ENCODE measurements at regions of chr16 and their contacts with region 1.

Region 1: DNA sequence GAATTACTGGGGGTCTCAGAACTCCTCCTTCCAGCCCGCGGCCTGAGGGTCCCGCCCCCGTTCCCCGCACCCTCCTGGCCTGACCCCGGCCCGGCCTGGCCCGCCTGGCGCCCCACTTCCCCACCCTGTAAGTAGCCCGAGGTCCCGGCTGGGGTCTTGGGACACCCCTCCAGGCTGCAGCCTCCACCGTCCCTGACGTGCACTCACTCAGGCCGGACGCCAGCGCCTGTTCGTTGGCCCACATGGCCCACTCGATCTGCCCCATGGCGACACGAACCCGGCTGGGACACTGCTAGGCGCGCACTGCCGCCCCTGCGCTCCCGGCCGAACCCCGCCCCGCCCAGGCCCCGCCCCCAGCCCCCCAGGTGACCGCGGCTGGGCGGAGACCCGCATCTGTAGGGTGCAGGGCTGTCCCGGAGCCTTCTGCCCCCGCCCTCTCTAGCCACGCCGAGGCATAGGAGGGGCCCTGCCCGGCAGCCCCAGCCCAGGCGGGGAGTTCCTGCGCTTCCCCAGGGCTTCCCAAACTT is at the start of gene CYBA:
- DNase-seq: peak; percentile 54 to 88 (median 68)
- ATAC-seq: peak; percentile 92
- H3K4me3 ChIP-seq: peak within 1 kb of the TSS; percentile 78
- H3K4me3 Mint-ChIP-seq: peak within 1 kb of the TSS; percentile 84 to 93 (median 90)
- H3K27ac ChIP-seq: peak within 1 kb of the TSS; percentile 84
- H3K27ac Mint-ChIP-seq: peak within 1 kb of the TSS; percentile 82 to 98 (median 91)
- H3K4me1 ChIP-seq: peaks cover 20 to 28% of the 10 kb centered on the region in 2 donors
- H3K4me1 Mint-ChIP-seq: peaks cover 6 to 27% (median 13%) of the 10 kb centered on the region in 7 donors
- H3K27me3 ChIP-seq: no peaks in the 10 kb centered on the region
- H3K27me3 Mint-ChIP-seq: no peaks in the 10 kb centered on the region
- total RNA-seq, gene CYBA: 240 to 498 (median 281) TPM

Region 2: DNA sequence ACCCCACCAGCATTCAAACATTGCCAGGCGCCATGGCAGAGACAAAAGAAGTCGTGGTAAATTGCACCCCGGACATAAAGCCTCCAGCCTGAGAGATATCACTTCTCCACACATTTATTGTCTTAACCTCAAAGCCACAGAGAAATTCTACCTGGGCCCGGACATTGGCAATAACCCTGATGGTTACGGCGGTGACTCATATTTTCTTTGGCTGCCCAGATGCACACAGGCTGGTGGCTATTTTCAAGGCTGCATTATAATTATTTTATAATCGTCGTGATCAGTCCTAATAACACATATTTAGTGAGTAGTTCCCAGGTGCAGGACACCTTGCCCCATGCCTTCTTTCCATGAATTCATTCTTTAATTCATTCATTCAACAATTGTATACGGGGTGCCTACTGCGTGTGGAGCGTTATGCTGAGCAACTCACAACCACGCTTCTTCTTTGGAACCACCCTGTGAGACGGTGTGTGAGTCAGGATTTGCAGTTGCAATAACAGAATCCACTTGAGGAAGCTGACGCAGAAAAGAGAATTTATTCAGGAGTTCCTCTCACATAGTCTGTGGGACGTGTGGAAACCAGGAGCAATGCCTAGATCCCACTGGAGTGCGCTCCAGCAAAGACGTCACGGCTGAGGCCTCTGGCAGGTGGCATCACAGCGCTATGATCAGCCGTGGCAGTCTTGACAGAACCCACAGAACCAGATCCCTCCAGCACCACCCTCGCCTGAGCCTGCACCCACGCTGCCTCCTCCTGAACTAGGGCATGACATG is 1826.7 kb before region 1 on chr16:
- CTCF ChIA-PET with region 1: no interaction called
- POLR2A ChIA-PET with region 1: no interaction called
- intact Hi-C with region 1: no loop called
- DNase-seq: no peak
- ATAC-seq: no peak
- H3K4me3 ChIP-seq: no peak overlapping the region
- H3K4me3 Mint-ChIP-seq: no peak overlapping the region
- H3K27ac ChIP-seq: no peak overlapping the region
- H3K27ac Mint-ChIP-seq: no peak overlapping the region
- H3K4me1 ChIP-seq: no peaks in the 10 kb centered on the region
- H3K4me1 Mint-ChIP-seq: peaks cover 0 to 4% (median 0%) of the 10 kb centered on the region in 7 donors
- H3K27me3 ChIP-seq: no peaks in the 10 kb centered on the region
- H3K27me3 Mint-ChIP-seq: peaks cover 28 to 60% (median 50%) of the 10 kb centered on the region in 5 donors

Region 3: GRCh38 chr16:88569985-88570690 is 80.7 kb before region 1 on chr16 and contains the start of gene ZC3H18:
- CTCF ChIA-PET with region 1: no interaction called
- POLR2A ChIA-PET with region 1: interaction called, 3 read pairs
- intact Hi-C with region 1: loop called (anchors 1 kb)
- DNase-seq: peak; percentile 93 to 99 (median 96)
- ATAC-seq: peak; percentile 99
- H3K4me3 ChIP-seq: peak within 1 kb of the TSS; percentile 84
- H3K4me3 Mint-ChIP-seq: peak within 1 kb of the TSS; percentile 81 to 93 (median 87)
- H3K27ac ChIP-seq: peak within 1 kb of the TSS; percentile 91
- H3K27ac Mint-ChIP-seq: peak within 1 kb of the TSS; percentile 45 to 93 (median 89)
- H3K4me1 ChIP-seq: peaks cover 21% of the 10 kb centered on the region in 2 donors
- H3K4me1 Mint-ChIP-seq: peaks cover 10 to 39% (median 34%) of the 10 kb centered on the region in 7 donors
- H3K27me3 ChIP-seq: no peaks in the 10 kb centered on the region
- H3K27me3 Mint-ChIP-seq: no peaks in the 10 kb centered on the region
- total RNA-seq, gene ZC3H18: 74.0 to 97.8 (median 82.6) TPM

Region 4: DNA sequence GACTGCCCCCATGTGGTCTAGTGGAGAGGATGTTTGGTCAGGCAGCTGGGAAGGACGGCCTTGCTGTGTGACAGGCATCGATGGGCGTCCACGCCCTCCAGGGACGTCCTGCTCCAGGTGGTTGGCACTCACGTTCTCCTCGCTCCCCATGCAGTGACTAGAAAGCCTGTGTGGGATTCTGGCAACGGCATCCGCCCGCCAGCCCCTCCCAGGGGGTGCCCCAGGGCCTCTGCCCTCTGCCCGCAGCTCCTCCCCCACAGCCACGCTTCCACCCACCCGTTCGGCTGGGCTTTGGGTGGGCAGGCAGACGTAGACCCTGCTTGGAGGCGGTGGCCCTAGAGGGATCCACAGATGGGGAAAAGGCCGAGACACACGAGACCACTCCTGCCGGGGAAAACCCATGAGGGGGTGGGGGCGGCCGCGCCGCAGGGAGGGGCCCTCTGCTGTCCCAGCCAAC is 17.1 kb before region 1 on chr16:
- CTCF ChIA-PET with region 1: no interaction called
- POLR2A ChIA-PET with region 1: interaction called, 11 read pairs
- intact Hi-C with region 1: loop called (anchors 1 to 2 kb)
- DNase-seq: peak in 2 of 9 donors; percentile 26 to 61
- ATAC-seq: peak; percentile 46
- H3K4me3 ChIP-seq: peak overlapping the region; percentile 52
- H3K4me3 Mint-ChIP-seq: peak overlapping the region; percentile 36 to 80 (median 63)
- H3K27ac ChIP-seq: peak overlapping the region; percentile 58
- H3K27ac Mint-ChIP-seq: peak overlapping the region in 2 of 9 donors; percentile 5 to 19
- H3K4me1 ChIP-seq: peaks cover 12 to 24% of the 10 kb centered on the region in 2 donors
- H3K4me1 Mint-ChIP-seq: peaks cover 17 to 36% (median 24%) of the 10 kb centered on the region in 7 donors
- H3K27me3 ChIP-seq: peaks cover 0 to under 1% of the 10 kb centered on the region in 2 donors
- H3K27me3 Mint-ChIP-seq: peaks cover 0 to 24% (median 8%) of the 10 kb centered on the region in 5 donors

Region 5: GRCh38 chr16:88662843-88663606 is 12.2 kb after region 1 on chr16 and contains the start of gene MVD:
- CTCF ChIA-PET with region 1: no interaction called
- POLR2A ChIA-PET with region 1: interaction called, 5 read pairs
- intact Hi-C with region 1: loop called (anchors 1 kb)
- DNase-seq: peak; percentile 88 to 96 (median 94)
- ATAC-seq: peak; percentile 99
- H3K4me3 ChIP-seq: peak within 1 kb of the TSS; percentile 89
- H3K4me3 Mint-ChIP-seq: peak within 1 kb of the TSS; percentile 91 to 96 (median 94)
- H3K27ac ChIP-seq: peak within 1 kb of the TSS; percentile 95
- H3K27ac Mint-ChIP-seq: peak within 1 kb of the TSS; percentile 56 to 95 (median 93)
- H3K4me1 ChIP-seq: peaks cover 8% of the 10 kb centered on the region in 2 donors
- H3K4me1 Mint-ChIP-seq: peaks cover 12 to 26% (median 19%) of the 10 kb centered on the region in 7 donors
- H3K27me3 ChIP-seq: no peaks in the 10 kb centered on the region
- H3K27me3 Mint-ChIP-seq: no peaks in the 10 kb centered on the region
- total RNA-seq, gene MVD: 37.7 to 66.9 (median 42.7) TPM

Region 6: DNA sequence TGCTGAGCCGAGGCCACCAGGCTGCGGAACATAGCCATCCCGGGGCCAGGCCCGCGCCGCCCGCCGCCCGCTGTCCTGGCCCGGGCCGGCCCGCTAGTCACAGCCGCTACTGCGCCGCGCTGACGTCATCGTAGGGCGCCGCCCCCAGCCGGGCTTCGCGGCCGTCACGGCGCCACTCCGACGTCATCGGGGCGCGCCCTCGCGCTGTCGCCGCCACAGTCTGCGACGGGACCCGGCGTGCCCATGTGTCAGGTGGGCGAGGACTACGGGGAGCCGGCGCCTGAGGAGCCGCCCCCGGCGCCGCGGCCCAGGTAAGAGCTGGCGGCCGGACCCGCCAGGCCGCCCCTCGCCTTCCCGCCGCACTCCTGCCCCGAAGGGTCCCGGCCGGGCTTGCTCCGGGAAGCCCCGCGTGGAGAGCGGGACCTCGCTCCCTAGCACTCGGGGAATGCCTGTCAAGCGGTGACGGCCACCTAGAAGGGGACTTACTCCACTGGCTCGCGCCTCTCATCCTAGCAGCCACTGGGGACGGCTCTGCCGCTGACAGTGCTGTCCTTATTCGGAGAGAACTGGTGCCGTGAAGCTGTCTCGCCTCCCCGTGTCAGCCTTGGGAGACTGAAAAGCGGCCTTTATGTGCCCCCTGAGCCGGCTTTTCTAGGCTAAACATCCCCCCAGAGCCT is 55.6 kb after region 1 on chr16 and contains the starts of genes CTU2 and RNF166:
- CTCF ChIA-PET with region 1: interaction called, 4 read pairs
- POLR2A ChIA-PET with region 1: interaction called, 13 read pairs
- intact Hi-C with region 1: loop called (anchors 1 kb)
- DNase-seq: peak; percentile 86 to 98 (median 92)
- ATAC-seq: peak; percentile 84
- H3K4me3 ChIP-seq: peak within 1 kb of the TSS; percentile 79
- H3K4me3 Mint-ChIP-seq: peak within 1 kb of the TSS; percentile 78 to 98 (median 94)
- H3K27ac ChIP-seq: peak within 1 kb of the TSS; percentile 88
- H3K27ac Mint-ChIP-seq: peak within 1 kb of the TSS; percentile 85 to 98 (median 97)
- H3K4me1 ChIP-seq: peaks cover 25 to 40% of the 10 kb centered on the region in 2 donors
- H3K4me1 Mint-ChIP-seq: peaks cover 31 to 45% (median 41%) of the 10 kb centered on the region in 7 donors
- H3K27me3 ChIP-seq: no peaks in the 10 kb centered on the region
- H3K27me3 Mint-ChIP-seq: no peaks in the 10 kb centered on the region
- total RNA-seq, gene CTU2: 26.0 to 43.3 (median 28.3) TPM
- total RNA-seq, gene RNF166: 99.8 to 324 (median 133) TPM

Region 7: GRCh38 chr16:88750854-88751253 is 100.0 kb after region 1 on chr16:
- CTCF ChIA-PET with region 1: no interaction called
- POLR2A ChIA-PET with region 1: no interaction called
- intact Hi-C with region 1: no loop called
- DNase-seq: no peak
- ATAC-seq: no peak
- H3K4me3 ChIP-seq: no peak overlapping the region
- H3K4me3 Mint-ChIP-seq: no peak overlapping the region
- H3K27ac ChIP-seq: no peak overlapping the region
- H3K27ac Mint-ChIP-seq: no peak overlapping the region
- H3K4me1 ChIP-seq: peaks cover 3 to 4% of the 10 kb centered on the region in 2 donors
- H3K4me1 Mint-ChIP-seq: peaks cover 3 to 11% (median 8%) of the 10 kb centered on the region in 7 donors
- H3K27me3 ChIP-seq: no peaks in the 10 kb centered on the region
- H3K27me3 Mint-ChIP-seq: no peaks in the 10 kb centered on the region

Region 8: DNA sequence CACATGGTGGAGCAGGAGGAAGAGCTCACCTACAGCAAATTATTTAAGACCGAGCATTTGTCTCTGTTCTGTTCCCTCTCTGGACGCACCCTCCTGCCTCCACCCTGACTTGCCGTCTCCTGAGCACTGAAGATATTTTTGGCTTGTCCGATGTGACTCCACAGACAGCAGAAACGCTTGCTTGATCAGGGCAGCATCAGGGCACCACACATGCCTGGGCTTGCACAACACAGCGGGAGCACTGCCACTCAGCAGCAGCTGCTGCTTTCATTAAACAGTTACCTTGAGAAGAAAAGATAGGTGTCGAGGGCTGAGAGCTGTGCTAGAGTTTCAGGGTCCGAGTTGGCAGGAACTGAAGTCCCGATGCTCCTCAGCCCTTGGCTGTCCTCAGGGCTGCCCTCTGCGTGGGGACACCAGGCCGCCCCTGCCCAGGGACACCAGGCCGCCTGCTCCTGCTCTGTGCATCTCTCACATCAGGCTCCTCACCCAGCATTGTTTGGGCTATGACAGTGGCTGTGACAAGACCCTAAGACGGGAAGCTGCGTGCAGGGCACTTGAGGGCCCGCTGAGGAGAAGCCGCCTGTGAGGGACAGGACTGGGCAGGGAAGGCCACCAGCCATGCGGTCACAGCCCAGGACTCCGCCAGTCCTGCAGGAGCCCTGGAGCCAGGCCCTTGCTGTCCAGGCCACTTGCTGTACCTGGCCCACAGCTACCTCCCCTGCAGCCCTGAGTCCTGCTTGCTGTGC is 499.5 kb after region 1 on chr16:
- CTCF ChIA-PET with region 1: no interaction called
- POLR2A ChIA-PET with region 1: no interaction called
- intact Hi-C with region 1: no loop called
- DNase-seq: no peak
- ATAC-seq: no peak
- H3K4me3 ChIP-seq: no peak overlapping the region
- H3K4me3 Mint-ChIP-seq: no peak overlapping the region
- H3K27ac ChIP-seq: no peak overlapping the region
- H3K27ac Mint-ChIP-seq: peak overlapping the region in 4 of 9 donors; percentile 28 to 65 (median 52)
- H3K4me1 ChIP-seq: no peaks in the 10 kb centered on the region
- H3K4me1 Mint-ChIP-seq: peaks cover 0 to 7% (median 0%) of the 10 kb centered on the region in 7 donors
- H3K27me3 ChIP-seq: no peaks in the 10 kb centered on the region
- H3K27me3 Mint-ChIP-seq: no peaks in the 10 kb centered on the region

Measured in naive thymus-derived CD4-positive, alpha-beta T cell (primary cell).